H1 (cell line): ENCODE measurements at regions of chr20 and their contacts with region 1.

Region 1: GRCh38 chr20:1802385-1803060 is 92.7 kb upstream of the SIRPA start:
- DNase-seq: peak in 1 of 2 experiments; percentile 77
- H3K4me3 ChIP-seq: peak overlapping the region; percentile 28 to 69 (median 42)
- H3K27ac ChIP-seq: no peak overlapping the region
- H3K4me1 ChIP-seq: peaks cover 3 to 10% (median 4%) of the 10 kb centered on the region in 4 experiments; a peak in 6 of 7 replicates
- H3K27me3 ChIP-seq: peaks cover 9 to 21% (median 19%) of the 10 kb centered on the region in 4 experiments
- CTCF ChIP-seq: peak; percentile 75 to 78 (median 77)
- EP300 ChIP-seq: no peak
- POLR2A ChIP-seq: no peak
- RAD21 ChIP-seq: peak; percentile 79 to 86

Region 2: GRCh38 chr20:1555952-1556351 is 246.6 kb before region 1 on chr20:
- CTCF ChIA-PET with region 1: no interaction called
- POLR2A ChIA-PET with region 1: no interaction called
- DNase-seq: no peak
- H3K4me3 ChIP-seq: no peak overlapping the region
- H3K27ac ChIP-seq: no peak overlapping the region
- H3K4me1 ChIP-seq: no peaks in the 10 kb centered on the region
- H3K27me3 ChIP-seq: no peaks in the 10 kb centered on the region
- CTCF ChIP-seq: no peak
- EP300 ChIP-seq: no peak
- POLR2A ChIP-seq: no peak
- RAD21 ChIP-seq: 0 out of 4 replicates have a peak, but pooled peaks of 1 of the 2 experiments have one; percentile 11

Region 3: DNA sequence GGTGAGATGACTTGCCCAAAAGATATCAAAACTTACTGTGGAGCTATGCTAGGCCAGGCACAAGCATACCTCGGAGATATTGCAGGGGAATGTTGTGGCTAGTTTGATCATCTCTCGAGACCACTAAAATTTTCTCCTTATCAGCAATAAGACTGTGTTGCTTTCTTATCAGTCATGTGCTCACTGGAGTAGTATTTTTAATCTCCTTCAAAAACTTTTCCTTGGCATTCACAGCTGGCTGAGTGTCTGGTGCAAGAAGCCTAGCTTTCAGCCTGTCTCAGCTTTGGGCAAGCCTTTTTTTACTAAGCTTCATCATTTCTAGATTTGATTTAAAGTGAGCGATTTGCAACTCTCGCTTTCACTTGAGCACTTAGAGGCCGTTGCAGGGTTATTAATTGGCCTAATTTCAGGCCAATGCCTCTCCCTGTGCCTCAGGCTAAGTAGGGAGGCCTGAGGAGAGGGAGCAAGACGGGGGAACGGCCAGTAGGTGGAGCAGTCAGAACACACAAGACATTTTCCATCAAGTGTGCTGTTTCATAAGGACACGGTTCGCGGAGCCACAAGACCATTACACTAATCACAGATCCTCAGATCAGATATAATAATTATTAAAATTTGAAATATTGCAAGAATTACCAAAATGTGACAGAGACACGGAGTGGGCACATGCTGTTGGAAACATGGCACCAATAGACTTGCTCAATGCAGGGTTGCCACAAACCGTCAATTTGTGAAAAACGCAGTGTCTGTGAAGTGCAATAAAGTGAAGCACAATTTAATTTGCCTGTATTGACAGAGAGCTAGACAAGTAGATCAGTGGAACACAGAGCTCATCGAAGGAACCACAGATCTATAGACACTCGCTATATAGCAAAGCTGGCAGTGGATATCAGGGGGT is 38.1 kb before region 1 on chr20:
- CTCF ChIA-PET with region 1: interaction called, 21 read pairs
- POLR2A ChIA-PET with region 1: no interaction called
- DNase-seq: peak; percentile 69 to 73
- H3K4me3 ChIP-seq: no peak overlapping the region
- H3K27ac ChIP-seq: no peak overlapping the region
- H3K4me1 ChIP-seq: no peaks in the 10 kb centered on the region
- H3K27me3 ChIP-seq: peaks cover 0 to 6% (median 0%) of the 10 kb centered on the region in 4 experiments; a peak in 2 of 7 replicates
- CTCF ChIP-seq: peak; percentile 80 to 95 (median 92)
- EP300 ChIP-seq: no peak
- POLR2A ChIP-seq: no peak
- RAD21 ChIP-seq: peak; percentile 86 to 88

Region 4: GRCh38 chr20:1776681-1777475 is 25.6 kb before region 1 on chr20:
- CTCF ChIA-PET with region 1: interaction called, 17 read pairs
- POLR2A ChIA-PET with region 1: interaction called, 12 read pairs
- DNase-seq: peak; percentile 50 to 97
- H3K4me3 ChIP-seq: peak overlapping the region; percentile 54 to 85 (median 66)
- H3K27ac ChIP-seq: no peak overlapping the region
- H3K4me1 ChIP-seq: peaks cover 2 to 7% (median 3%) of the 10 kb centered on the region in 4 experiments; a peak in 5 of 7 replicates
- H3K27me3 ChIP-seq: peaks cover 0 to 3% (median 1%) of the 10 kb centered on the region in 4 experiments; a peak in 4 of 7 replicates
- CTCF ChIP-seq: peak; percentile 75 to 89 (median 77)
- EP300 ChIP-seq: no peak
- POLR2A ChIP-seq: peak in 1 of 2 experiments; percentile 83; a peak in 2 of 3 replicates
- RAD21 ChIP-seq: peak; percentile 77 to 82

Region 5: DNA sequence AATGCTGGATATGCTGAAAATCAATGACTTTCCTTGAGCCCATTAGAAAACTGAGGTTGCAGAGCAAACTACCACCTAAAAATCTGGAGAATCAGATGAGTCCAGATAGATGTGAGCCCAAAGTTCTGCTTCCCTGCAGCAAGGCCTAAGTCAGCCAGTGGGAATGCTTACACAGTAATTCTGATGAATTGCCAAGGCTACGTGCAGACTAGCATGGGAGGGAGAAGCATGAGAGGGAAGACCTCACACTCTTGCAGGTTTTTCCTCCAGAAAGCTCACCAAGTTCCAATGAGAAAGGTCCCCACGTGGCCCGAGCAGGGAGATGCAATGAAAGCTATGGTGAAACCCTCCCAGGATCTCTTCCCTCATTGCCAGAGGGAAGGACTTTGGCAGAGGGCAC is 12.1 kb before region 1 on chr20:
- CTCF ChIA-PET with region 1: interaction called, 11 read pairs
- POLR2A ChIA-PET with region 1: interaction called, 5 read pairs
- DNase-seq: no peak
- H3K4me3 ChIP-seq: no peak overlapping the region
- H3K27ac ChIP-seq: no peak overlapping the region
- H3K4me1 ChIP-seq: no peaks in the 10 kb centered on the region
- H3K27me3 ChIP-seq: no peaks in the 10 kb centered on the region; a peak in 1 of 7 replicates
- CTCF ChIP-seq: no peak
- EP300 ChIP-seq: no peak
- POLR2A ChIP-seq: no peak
- RAD21 ChIP-seq: no peak

Region 6: GRCh38 chr20:1820138-1821079 is 17.9 kb after region 1 on chr20:
- CTCF ChIA-PET with region 1: interaction called, 8 read pairs
- POLR2A ChIA-PET with region 1: interaction called, 26 read pairs
- DNase-seq: no peak
- H3K4me3 ChIP-seq: no peak overlapping the region
- H3K27ac ChIP-seq: no peak overlapping the region
- H3K4me1 ChIP-seq: peaks cover 6 to 30% (median 18%) of the 10 kb centered on the region in 4 experiments
- H3K27me3 ChIP-seq: no peaks in the 10 kb centered on the region; a peak in 1 of 7 replicates
- CTCF ChIP-seq: no peak
- EP300 ChIP-seq: no peak
- POLR2A ChIP-seq: no peak
- RAD21 ChIP-seq: no peak

Region 7: GRCh38 chr20:1888796-1889463 is 86.4 kb after region 1 on chr20:
- CTCF ChIA-PET with region 1: interaction called, 40 read pairs
- POLR2A ChIA-PET with region 1: interaction called, 4 read pairs
- DNase-seq: no peak
- H3K4me3 ChIP-seq: no peak overlapping the region
- H3K27ac ChIP-seq: no peak overlapping the region
- H3K4me1 ChIP-seq: peaks cover 2 to 12% (median 6%) of the 10 kb centered on the region in 4 experiments; a peak in 5 of 7 replicates
- H3K27me3 ChIP-seq: peaks cover 0 to 19% (median 14%) of the 10 kb centered on the region in 4 experiments; a peak in 6 of 7 replicates
- CTCF ChIP-seq: no peak
- EP300 ChIP-seq: no peak
- POLR2A ChIP-seq: no peak
- RAD21 ChIP-seq: no peak; a peak in 1 of 4 replicates